ENCODE measurements at regions of chr3 and their contacts with region 1.

Region 1: GRCh38 chr3:137110484-137110883 is 152.7 kb downstream of the IL20RB start:
- DNase-seq: no peak
- H3K4me3 ChIP-seq: no peak overlapping the region
- H3K27ac ChIP-seq: no peak overlapping the region
- H3K4me1 ChIP-seq: peaks cover 3 to 12% (median 7%) of the 10 kb centered on the region in 4 experiments; a peak in 5 of 7 replicates
- H3K27me3 ChIP-seq: peaks cover 0 to 3% (median 0%) of the 10 kb centered on the region in 4 experiments; a peak in 1 of 7 replicates
- CTCF ChIP-seq: peak in 2 of 3 experiments; percentile 56 to 71; a peak in 3 of 4 replicates
- EP300 ChIP-seq: no peak
- POLR2A ChIP-seq: no peak
- RAD21 ChIP-seq: peak; percentile 76 to 80

Region 2: GRCh38 chr3:137032465-137033120 is 77.9 kb before region 1 on chr3:
- CTCF ChIA-PET with region 1: interaction called, 25 read pairs
- POLR2A ChIA-PET with region 1: no interaction called
- DNase-seq: peak; percentile 89 to 100
- H3K4me3 ChIP-seq: peak overlapping the region; percentile 24 to 55 (median 42); a peak in 7 of 8 replicates
- H3K27ac ChIP-seq: no peak overlapping the region
- H3K4me1 ChIP-seq: peaks cover 0 to 13% (median 3%) of the 10 kb centered on the region in 4 experiments; a peak in 5 of 7 replicates
- H3K27me3 ChIP-seq: peaks cover 0 to 22% (median 11%) of the 10 kb centered on the region in 4 experiments; a peak in 6 of 7 replicates
- CTCF ChIP-seq: peak; percentile 90 to 94 (median 94)
- EP300 ChIP-seq: no peak
- POLR2A ChIP-seq: no peak
- RAD21 ChIP-seq: peak; percentile 92 to 98

Region 3: GRCh38 chr3:137121704-137122314 is 11.3 kb after region 1 on chr3:
- CTCF ChIA-PET with region 1: interaction called, 66 read pairs
- POLR2A ChIA-PET with region 1: no interaction called
- DNase-seq: no peak
- H3K4me3 ChIP-seq: no peak overlapping the region
- H3K27ac ChIP-seq: no peak overlapping the region
- H3K4me1 ChIP-seq: no peaks in the 10 kb centered on the region
- H3K27me3 ChIP-seq: no peaks in the 10 kb centered on the region
- CTCF ChIP-seq: peak; percentile 72 to 91 (median 83)
- EP300 ChIP-seq: no peak
- POLR2A ChIP-seq: no peak
- RAD21 ChIP-seq: peak; percentile 77 to 85

Region 4: GRCh38 chr3:137148917-137149316 is 38.4 kb after region 1 on chr3:
- CTCF ChIA-PET with region 1: interaction called, 13 read pairs
- POLR2A ChIA-PET with region 1: no interaction called
- DNase-seq: no peak
- H3K4me3 ChIP-seq: no peak overlapping the region
- H3K27ac ChIP-seq: no peak overlapping the region
- H3K4me1 ChIP-seq: peaks cover 0 to 8% (median 5%) of the 10 kb centered on the region in 4 experiments; a peak in 4 of 7 replicates
- H3K27me3 ChIP-seq: no peaks in the 10 kb centered on the region
- CTCF ChIP-seq: no peak
- EP300 ChIP-seq: no peak
- POLR2A ChIP-seq: no peak
- RAD21 ChIP-seq: no peak

Region 5: DNA sequence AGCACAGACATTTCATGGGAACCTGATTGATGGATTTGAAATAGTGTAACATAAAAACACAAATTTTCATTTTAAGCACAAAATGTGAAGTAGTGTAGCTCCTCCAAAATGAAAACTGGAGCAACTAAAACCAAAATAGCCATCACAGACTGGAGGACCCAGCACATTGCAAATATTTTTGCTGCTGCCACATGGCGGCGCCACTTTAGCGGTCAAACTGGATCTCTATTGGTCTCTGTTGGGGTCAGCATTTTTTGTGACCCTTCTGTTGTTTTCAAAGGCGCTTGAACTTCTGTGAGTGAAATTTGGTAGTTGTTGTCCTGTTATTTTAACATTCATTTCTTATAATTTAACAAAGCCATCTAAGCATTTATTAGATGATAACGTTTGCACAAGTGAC is 107.2 kb after region 1 on chr3:
- CTCF ChIA-PET with region 1: interaction called, 10 read pairs
- POLR2A ChIA-PET with region 1: no interaction called
- DNase-seq: peak; percentile 7 to 79
- H3K4me3 ChIP-seq: no peak overlapping the region
- H3K27ac ChIP-seq: no peak overlapping the region
- H3K4me1 ChIP-seq: no peaks in the 10 kb centered on the region
- H3K27me3 ChIP-seq: no peaks in the 10 kb centered on the region
- CTCF ChIP-seq: peak; percentile 71 to 91 (median 80)
- EP300 ChIP-seq: no peak
- POLR2A ChIP-seq: no peak
- RAD21 ChIP-seq: peak; percentile 80 to 87

Region 6: DNA sequence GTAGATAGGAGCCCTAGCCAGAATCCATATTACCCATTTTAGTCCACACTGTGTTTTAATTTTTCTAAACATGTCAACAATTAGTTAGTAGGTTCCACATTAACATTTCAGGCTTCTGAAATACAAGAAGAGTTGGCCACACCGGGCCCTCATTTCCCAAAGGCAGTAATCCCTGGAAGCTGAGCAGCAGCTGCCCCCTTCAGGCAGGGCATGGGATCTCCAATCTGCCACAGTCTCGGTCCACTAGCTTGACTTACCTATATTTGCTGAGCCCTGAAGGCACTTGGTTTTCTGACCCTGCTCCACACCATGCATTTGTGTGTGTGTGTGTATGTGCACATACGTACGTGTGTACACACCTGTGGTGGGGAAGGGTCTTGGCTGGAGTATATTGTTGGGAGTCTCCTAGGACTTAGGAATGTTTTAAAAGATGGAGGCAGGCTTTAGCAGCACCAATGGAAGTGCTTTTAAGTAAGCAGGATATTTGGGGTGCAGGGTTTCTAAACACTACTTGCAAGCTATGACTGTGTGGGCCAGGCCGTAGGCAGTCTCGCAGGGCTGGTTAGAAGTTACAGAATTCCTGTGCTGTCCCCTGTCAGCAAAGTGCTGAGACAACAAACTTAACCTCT is 582.4 kb after region 1 on chr3:
- CTCF ChIA-PET with region 1: interaction called, 28 read pairs
- POLR2A ChIA-PET with region 1: no interaction called
- DNase-seq: peak; percentile 57 to 75
- H3K4me3 ChIP-seq: no peak overlapping the region
- H3K27ac ChIP-seq: no peak overlapping the region
- H3K4me1 ChIP-seq: peaks cover 0 to 10% (median 6%) of the 10 kb centered on the region in 4 experiments; a peak in 4 of 7 replicates
- H3K27me3 ChIP-seq: no peaks in the 10 kb centered on the region
- CTCF ChIP-seq: peak; percentile 95 to 98 (median 96)
- EP300 ChIP-seq: no peak
- POLR2A ChIP-seq: no peak
- RAD21 ChIP-seq: peak; percentile 98 to 100

Region 7: DNA sequence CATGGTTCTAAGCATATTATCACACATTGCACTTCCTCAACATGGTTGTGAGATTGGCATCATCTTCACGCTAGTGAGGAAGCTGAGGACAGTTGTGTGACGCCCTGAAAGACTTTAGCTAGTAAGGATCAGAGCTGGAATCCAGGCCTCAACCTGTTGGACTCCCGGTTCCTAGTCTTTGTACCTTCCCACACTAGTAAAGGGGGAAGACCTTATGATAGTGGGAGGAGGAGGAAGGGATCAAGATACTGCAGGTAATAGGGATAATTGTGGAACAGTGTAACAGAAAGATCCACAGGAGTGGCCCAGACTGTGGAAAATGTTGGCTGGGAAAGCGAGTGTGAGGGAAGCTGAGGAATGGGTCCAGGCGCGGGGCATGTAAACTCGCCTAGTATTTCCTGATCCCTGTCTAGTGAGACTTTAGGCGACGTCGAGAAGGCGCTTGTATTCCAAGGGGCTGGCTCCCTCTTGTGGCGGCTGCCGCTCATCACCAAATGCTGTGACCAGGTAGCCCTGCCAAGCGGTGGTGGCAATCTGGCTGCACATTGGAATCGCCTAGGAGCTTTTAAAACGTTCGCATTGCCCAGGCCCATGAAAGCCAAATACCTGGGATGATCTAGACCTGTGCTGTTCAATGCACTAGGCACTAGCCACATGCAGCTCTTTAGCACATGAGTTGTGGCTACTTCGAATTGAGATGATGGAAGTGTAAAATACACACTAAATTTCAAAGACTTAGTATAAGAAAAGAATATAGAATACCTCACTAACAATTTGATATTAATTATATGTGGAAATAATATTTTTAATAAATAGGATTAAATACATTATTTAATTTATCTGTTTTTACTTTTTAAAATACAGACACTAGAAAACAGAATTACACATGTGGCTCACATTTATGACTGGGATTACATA is 860.7 kb after region 1 on chr3:
- CTCF ChIA-PET with region 1: interaction called, 11 read pairs
- POLR2A ChIA-PET with region 1: no interaction called
- DNase-seq: peak; percentile 73 to 93
- H3K4me3 ChIP-seq: no peak overlapping the region
- H3K27ac ChIP-seq: no peak overlapping the region
- H3K4me1 ChIP-seq: no peaks in the 10 kb centered on the region
- H3K27me3 ChIP-seq: no peaks in the 10 kb centered on the region; a peak in 1 of 7 replicates
- CTCF ChIP-seq: peak; percentile 90 to 95 (median 92)
- EP300 ChIP-seq: no peak
- POLR2A ChIP-seq: no peak
- RAD21 ChIP-seq: peak; percentile 95 to 97